Panc1 (cell line): ENCODE measurements at regions of chr19 and their contacts with region 1.

Region 1: DNA sequence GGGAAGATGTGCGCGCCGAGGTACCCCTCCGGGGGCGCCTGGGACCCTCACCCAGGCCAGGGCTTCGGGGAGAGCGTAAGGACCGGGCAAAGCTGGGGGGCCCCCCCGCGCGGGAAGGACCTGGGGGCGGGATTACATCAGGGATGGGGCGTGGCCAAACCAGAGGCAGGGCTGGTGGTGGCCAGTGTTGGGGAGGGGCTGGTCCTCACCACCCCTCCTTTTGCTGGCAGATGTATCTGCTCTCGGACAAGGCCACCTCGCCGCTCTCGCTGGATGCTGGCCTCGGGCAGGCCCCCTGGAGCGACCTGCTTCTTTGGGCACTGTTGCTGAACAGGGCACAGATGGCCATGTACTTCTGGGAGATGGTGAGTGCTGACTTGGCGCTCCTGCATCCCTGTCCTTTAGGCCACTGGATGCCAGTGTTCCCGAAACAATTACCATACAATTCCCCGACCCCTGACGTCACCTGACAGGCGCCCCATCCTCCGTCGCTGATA is 25.3 kb downstream of the TRPM4 start:
- DNase-seq: no peak
- ATAC-seq: no peak
- H3K4me3 ChIP-seq: no peak overlapping the region
- H3K27ac ChIP-seq: no peak overlapping the region
- H3K4me1 ChIP-seq: no peaks in the 10 kb centered on the region
- H3K27me3 ChIP-seq: no peaks in the 10 kb centered on the region
- CTCF ChIP-seq: no peak

Region 2: GRCh38 chr19:48962029-48962848 is 220.7 kb before region 1 on chr19:
- CTCF ChIA-PET with region 1: no interaction called
- POLR2A ChIA-PET with region 1: interaction called, 12 read pairs
- in situ Hi-C with region 1: no loop called
- intact Hi-C with region 1: no loop called
- DNase-seq: no peak
- ATAC-seq: peak; percentile 62
- H3K4me3 ChIP-seq: no peak overlapping the region
- H3K27ac ChIP-seq: peak overlapping the region; percentile 88
- H3K4me1 ChIP-seq: peaks cover 35% of the 10 kb centered on the region
- H3K27me3 ChIP-seq: no peaks in the 10 kb centered on the region
- CTCF ChIP-seq: no peak